WTC11 (cell line): ENCODE measurements at regions of chr5 and their contacts with region 1.

Region 1: GRCh38 chr5:140840978-140841959 is at the start of gene PCDHA8:
- DNase-seq: peak; percentile 76
- ATAC-seq: peak; percentile 85
- H3K4me3 Mint-ChIP-seq: peak within 1 kb of the TSS; percentile 49
- H3K27ac Mint-ChIP-seq: no peak within 1 kb of the TSS
- H3K4me1 Mint-ChIP-seq: peaks cover 7% of the 10 kb centered on the region; the same call in 1 of the 2 replicates
- H3K27me3 Mint-ChIP-seq: no peaks in the 10 kb centered on the region; the same call in 1 of the 2 replicates
- CTCF ChIP-seq: peak; percentile 65
- total RNA-seq, gene PCDHA8: 0.85 to 1.3 TPM (median 1.3 TPM) in 3 replicates

Region 2: GRCh38 chr5:140700177-140701144 is 140.8 kb before region 1 on chr5 and contains the start of gene ZMAT2:
- CTCF ChIA-PET with region 1: interaction called, 10 read pairs
- POLR2A ChIA-PET with region 1: no interaction called
- DNase-seq: peak; percentile 91
- ATAC-seq: peak; percentile 99
- H3K4me3 Mint-ChIP-seq: peak within 1 kb of the TSS; percentile 97
- H3K27ac Mint-ChIP-seq: peak within 1 kb of the TSS; percentile 86
- H3K4me1 Mint-ChIP-seq: peaks cover 23% of the 10 kb centered on the region
- H3K27me3 Mint-ChIP-seq: no peaks in the 10 kb centered on the region
- CTCF ChIP-seq: no peak
- total RNA-seq, gene ZMAT2: 50.3 to 57.2 TPM (median 54.7 TPM) in 3 replicates

Region 3: DNA sequence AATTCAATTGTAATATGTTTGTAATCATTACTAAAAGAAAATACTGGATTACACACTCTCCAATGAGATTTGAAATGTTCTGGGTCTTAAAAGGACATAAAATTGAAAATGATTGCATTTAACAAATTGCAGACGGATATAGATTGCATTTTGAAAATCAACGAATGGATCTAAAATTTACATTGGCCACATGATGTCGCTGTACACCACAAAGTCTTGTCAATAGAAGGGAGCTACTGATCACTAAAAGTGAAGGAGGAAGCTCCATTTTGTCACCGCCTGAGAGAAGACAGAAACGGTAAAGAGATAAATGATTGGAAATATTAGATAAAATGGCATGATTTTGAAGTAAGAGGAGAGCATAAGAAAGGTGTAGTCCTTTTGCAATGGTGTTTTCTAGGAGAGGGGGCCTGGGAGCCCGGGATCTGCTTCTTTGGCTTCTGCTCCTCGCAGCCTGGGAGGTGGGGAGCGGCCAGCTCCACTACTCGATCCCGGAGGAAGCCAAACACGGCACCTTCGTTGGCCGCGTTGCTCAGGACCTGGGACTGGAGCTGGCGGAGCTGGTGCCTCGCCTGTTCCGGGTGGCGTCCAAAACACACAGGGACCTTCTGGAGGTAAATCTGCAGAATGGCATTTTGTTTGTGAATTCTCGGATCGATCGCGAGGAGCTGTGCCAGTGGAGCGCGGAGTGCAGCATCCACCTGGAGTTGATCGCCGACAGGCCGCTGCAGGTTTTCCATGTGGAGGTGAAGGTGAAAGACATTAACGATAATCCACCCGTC is 55.2 kb before region 1 on chr5 and contains the start of gene PCDHA1:
- CTCF ChIA-PET with region 1: interaction called, 38 read pairs
- POLR2A ChIA-PET with region 1: no interaction called
- DNase-seq: peak; percentile 24
- ATAC-seq: peak; percentile 69
- H3K4me3 Mint-ChIP-seq: peak within 1 kb of the TSS; percentile 58
- H3K27ac Mint-ChIP-seq: no peak within 1 kb of the TSS
- H3K4me1 Mint-ChIP-seq: peaks cover 5% of the 10 kb centered on the region; the same call in 1 of the 2 replicates
- H3K27me3 Mint-ChIP-seq: peaks cover 6% of the 10 kb centered on the region
- CTCF ChIP-seq: peak; percentile 49
- total RNA-seq, gene PCDHA1: 2.2 to 2.7 TPM (median 2.4 TPM) in 3 replicates

Region 4: DNA sequence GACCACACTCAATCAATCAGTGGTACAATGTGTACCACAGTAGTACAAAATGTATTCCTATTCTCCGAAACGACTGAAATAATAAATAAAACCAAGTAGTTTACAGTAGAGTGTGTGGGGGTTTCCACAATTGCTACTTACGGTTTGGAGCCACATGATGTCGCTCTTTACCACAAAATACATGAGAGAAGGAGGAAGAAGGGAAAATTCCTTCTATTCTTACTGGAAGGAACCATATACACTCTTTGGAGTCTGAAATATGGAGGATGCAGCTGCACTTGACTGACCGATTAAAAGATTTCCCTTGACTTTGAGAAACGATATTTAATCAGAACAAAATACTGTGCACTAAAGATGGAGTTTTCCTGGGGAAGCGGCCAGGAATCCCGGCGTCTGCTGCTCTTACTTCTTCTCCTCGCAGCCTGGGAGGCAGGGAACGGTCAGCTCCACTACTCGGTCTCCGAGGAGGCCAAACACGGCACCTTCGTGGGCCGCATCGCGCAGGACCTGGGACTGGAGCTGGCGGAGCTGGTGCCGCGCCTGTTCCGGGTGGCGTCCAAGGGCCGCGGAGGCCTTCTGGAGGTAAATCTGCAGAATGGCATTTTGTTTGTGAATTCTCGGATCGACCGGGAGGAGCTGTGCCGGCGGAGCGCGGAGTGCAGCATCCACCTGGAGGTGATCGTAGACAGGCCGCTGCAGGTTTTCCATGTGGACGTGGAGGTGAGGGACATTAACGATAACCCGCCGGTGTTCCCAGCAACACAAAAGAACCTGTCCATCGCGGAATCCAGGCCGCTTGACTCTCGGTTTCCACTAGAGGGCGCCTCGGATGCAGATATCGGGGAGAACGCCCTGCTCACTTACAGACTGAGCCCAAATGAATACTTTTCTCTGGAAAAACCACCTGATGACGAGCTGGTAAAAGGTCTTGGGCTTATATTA is 34.2 kb before region 1 on chr5 and contains the start of gene PCDHA4:
- CTCF ChIA-PET with region 1: interaction called, 52 read pairs
- POLR2A ChIA-PET with region 1: no interaction called
- DNase-seq: peak; percentile 90
- ATAC-seq: peak; percentile 89
- H3K4me3 Mint-ChIP-seq: peak within 1 kb of the TSS; percentile 92
- H3K27ac Mint-ChIP-seq: peak within 1 kb of the TSS; percentile 36; the same call in 1 of the 2 replicates
- H3K4me1 Mint-ChIP-seq: peaks cover 7% of the 10 kb centered on the region
- H3K27me3 Mint-ChIP-seq: no peaks in the 10 kb centered on the region
- CTCF ChIP-seq: peak; percentile 80
- total RNA-seq, gene PCDHA4: 5.4 to 6.3 TPM (median 5.6 TPM) in 3 replicates

Region 5: GRCh38 chr5:140827704-140828361 is 13.4 kb before region 1 on chr5 and contains the start of gene PCDHA6:
- CTCF ChIA-PET with region 1: interaction called, 24 read pairs
- POLR2A ChIA-PET with region 1: no interaction called
- DNase-seq: no peak
- ATAC-seq: peak; percentile 24; the same call in 1 of the 2 replicates
- H3K4me3 Mint-ChIP-seq: peak within 1 kb of the TSS; percentile 74
- H3K27ac Mint-ChIP-seq: no peak within 1 kb of the TSS
- H3K4me1 Mint-ChIP-seq: peaks cover 4% of the 10 kb centered on the region; the same call in 1 of the 2 replicates
- H3K27me3 Mint-ChIP-seq: no peaks in the 10 kb centered on the region
- CTCF ChIP-seq: no peak
- total RNA-seq, gene PCDHA6: 2.0 to 2.4 TPM (median 2.4 TPM) in 3 replicates

Region 6: DNA sequence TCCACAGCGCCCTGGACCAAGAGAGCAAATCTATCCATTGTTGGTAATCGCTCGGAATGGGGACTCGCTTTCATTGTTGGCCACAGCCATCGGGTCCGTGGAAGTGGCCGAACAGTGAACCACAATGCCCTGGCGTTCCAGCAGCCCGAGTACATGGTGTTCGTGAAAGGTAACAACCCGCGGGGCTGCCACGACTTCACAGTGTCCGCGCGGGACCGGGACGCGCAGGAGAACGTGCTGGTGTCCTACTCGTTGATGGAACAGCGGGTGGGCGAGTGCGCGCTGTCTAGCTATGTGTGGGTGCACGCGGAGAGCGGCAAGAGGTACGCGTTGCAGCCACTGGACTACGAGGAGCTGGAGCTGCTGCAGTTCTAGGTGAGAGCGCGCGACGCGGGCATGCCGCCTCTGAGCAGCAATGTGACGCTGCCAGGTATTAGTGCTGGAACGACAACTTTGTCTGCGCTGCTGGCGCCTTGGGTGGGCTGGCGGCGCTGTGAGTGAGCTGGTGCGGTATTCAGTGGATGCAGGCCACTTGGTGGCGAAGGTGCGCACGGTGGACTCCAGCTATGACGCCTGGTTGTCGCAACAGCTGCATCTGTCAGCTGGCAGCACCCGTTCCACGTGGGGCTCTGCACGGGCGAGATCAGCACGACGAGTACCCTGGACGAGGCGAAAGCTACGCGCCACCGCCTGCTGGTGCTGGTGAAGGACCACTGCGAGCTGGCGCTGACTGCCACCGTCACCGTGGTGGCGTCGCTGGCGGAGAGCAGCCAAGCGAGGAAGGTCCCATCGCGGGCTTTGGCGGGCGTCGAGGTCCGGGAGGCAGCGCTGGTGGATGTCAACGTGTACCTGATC is 21.4 kb after region 1 on chr5:
- CTCF ChIA-PET with region 1: interaction called, 61 read pairs
- POLR2A ChIA-PET with region 1: no interaction called
- DNase-seq: no peak
- ATAC-seq: no peak
- H3K4me3 Mint-ChIP-seq: no peak overlapping the region
- H3K27ac Mint-ChIP-seq: no peak overlapping the region
- H3K4me1 Mint-ChIP-seq: peaks cover 8% of the 10 kb centered on the region
- H3K27me3 Mint-ChIP-seq: no peaks in the 10 kb centered on the region
- CTCF ChIP-seq: no peak

Region 7: GRCh38 chr5:140966293-140967225 is 125.3 kb after region 1 on chr5 and contains the start of gene PCDHAC2:
- CTCF ChIA-PET with region 1: interaction called, 12 read pairs
- POLR2A ChIA-PET with region 1: no interaction called
- DNase-seq: peak; percentile 78
- ATAC-seq: peak; percentile 77
- H3K4me3 Mint-ChIP-seq: peak within 1 kb of the TSS; percentile 92
- H3K27ac Mint-ChIP-seq: peak within 1 kb of the TSS; percentile 51; the same call in 1 of the 2 replicates
- H3K4me1 Mint-ChIP-seq: peaks cover 50% of the 10 kb centered on the region
- H3K27me3 Mint-ChIP-seq: peaks cover 21% of the 10 kb centered on the region
- CTCF ChIP-seq: no peak
- total RNA-seq, gene PCDHAC2: 6.7 to 11.3 TPM (median 7.9 TPM) in 3 replicates